Heart left ventricle (tissue), 16 donors: ENCODE measurements at regions of chr11 and their contacts with region 1.

Region 1: GRCh38 chr11:34002268-34002807 is 49.2 kb upstream of the CAPRIN1 start:
- DNase-seq: no peak
- ATAC-seq: no peak
- H3K4me3 ChIP-seq: no peak overlapping the region
- H3K27ac ChIP-seq: no peak overlapping the region
- H3K4me1 ChIP-seq: peaks cover 0 to 1% (median 0%) of the 10 kb centered on the region in 12 donors
- H3K27me3 ChIP-seq: peaks cover 0 to 14% (median 2%) of the 10 kb centered on the region in 9 donors
- CTCF ChIP-seq: no peak
- POLR2A ChIP-seq: no peak

Region 2: DNA sequence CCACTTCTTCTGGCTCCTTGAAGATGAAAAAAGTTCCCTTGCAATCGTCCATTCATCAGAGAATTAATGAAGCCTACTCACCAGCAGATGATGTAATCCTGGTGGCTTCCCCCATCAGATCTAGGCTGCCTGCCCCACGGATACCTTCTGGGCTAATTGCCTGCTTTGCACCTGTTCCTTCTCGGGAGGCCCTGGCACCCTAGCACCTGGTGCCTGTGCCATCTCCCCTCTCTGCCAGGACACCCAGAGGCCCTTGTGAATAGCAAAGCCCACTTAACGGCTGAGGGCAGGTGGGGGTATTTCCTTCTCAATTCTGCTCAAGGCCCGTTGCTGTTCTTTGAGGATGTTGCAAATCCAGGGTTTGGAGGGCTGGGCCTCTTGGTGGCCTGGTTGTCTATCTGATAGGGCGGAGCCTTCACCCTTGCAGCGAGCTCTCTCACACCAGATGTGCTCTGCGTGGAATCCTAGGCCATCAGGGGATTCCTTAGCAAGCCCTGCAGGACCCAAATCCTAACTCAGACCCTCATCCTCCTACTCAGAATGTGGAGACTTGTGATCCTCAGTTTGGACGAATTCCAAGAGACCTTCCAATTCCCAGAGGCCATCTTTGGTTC is 110.5 kb before region 1 on chr11 and contains the start of gene LMO2:
- intact Hi-C with region 1: no loop called
- DNase-seq: no peak
- ATAC-seq: peak in 1 of 4 donors; percentile 47
- H3K4me3 ChIP-seq: no peak within 1 kb of the TSS
- H3K27ac ChIP-seq: peak within 1 kb of the TSS in 1 of 12 donors; percentile 67
- H3K4me1 ChIP-seq: peaks cover 0 to 51% (median 0%) of the 10 kb centered on the region in 12 donors
- H3K27me3 ChIP-seq: no peaks in the 10 kb centered on the region
- CTCF ChIP-seq: no peak
- POLR2A ChIP-seq: no peak
- total RNA-seq, gene LMO2: 4.5 to 29.6 (median 8.7) TPM

Region 3: DNA sequence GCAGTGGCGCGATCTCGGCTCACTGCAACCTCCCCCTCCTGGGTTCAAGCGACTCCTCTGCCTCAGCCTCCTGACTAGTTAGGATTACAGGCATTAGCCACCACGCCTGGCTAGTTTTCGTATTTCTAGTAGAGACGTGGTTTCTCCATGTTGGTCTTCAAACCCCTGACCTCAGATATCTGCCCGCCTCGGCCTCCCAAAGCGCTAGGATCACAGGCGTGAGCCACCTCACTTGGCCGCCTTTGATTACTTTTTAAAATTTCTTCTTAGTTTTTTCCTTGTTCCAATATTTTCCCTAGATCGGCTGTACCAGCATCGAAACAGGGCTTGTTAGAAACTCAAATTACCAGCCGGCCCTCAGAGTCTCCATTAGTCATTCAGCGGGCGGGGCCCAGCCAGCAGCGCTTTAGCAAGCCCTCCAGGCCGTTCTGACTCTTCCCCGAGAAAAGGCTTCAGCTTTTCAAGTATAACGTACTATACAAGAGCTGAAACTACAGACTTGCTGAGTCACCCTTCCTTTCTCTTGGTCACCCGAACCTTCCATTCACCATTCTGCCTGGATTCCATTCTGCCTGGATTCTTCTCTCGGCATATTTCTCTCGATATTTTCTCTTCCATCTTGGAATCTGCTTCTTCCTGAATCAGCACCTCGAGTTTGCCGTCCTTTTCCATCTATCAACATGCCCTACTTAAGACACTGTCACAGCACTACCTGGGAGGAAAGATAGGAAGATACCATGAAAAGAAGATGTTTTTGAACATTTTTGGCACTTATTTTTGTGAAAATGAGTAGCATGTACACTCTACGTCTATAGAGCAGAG is 42.5 kb after region 1 on chr11:
- intact Hi-C with region 1: loop called in 3 of 10 experiments (anchors 5 kb)
- DNase-seq: no peak
- ATAC-seq: peak in 2 of 4 donors; percentile 34 to 55
- H3K4me3 ChIP-seq: peak overlapping the region in 1 of 12 donors; percentile 2
- H3K27ac ChIP-seq: no peak overlapping the region
- H3K4me1 ChIP-seq: no peaks in the 10 kb centered on the region
- H3K27me3 ChIP-seq: no peaks in the 10 kb centered on the region
- CTCF ChIP-seq: no peak
- POLR2A ChIP-seq: no peak

Region 4: GRCh38 chr11:34068111-34068510 is 65.8 kb after region 1 on chr11:
- intact Hi-C with region 1: no loop called
- DNase-seq: no peak
- ATAC-seq: peak; percentile 76 to 91 (median 90)
- H3K4me3 ChIP-seq: no peak overlapping the region
- H3K27ac ChIP-seq: peak overlapping the region in 8 of 12 donors; percentile 0 to 44 (median 28)
- H3K4me1 ChIP-seq: peaks cover 0 to 69% (median 41%) of the 10 kb centered on the region in 12 donors
- H3K27me3 ChIP-seq: no peaks in the 10 kb centered on the region
- CTCF ChIP-seq: no peak
- POLR2A ChIP-seq: no peak

Region 5: DNA sequence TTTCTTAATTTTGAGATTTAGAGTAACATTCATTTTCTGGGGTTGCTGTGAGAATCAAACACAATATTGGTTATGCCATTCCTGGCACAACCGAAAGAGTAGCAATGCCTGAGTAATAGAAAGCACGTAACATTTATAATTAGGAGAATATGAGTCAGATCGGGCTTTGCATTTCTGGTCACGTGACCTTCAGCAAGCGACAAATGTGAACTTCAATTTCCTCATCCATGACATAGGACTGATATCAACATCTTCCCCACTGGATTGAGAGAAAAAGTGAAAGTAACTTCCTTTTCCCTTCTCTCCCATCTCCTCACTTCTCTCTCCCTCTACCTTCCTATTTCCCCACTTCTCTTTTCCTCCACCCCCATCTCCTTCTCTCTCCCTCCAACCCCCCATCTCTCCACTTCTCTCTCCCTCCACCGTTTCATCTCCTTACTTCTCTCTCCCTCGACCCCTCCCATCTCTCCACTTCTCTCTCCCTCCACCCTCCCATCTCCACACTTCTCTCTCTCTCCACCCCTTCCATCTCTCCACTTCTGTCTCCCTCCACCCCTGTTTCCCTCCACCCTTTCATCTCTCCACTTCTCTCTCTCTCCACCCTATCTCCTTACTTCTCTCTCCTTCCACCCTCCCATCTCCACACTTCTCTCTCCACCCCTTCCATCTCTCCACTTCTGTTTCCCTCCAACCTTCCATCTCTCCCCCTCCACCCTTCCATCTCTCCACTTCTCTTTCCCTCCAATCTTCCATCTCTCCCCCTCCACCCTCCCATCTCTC is 402.9 kb after region 1 on chr11:
- intact Hi-C with region 1: no loop called
- DNase-seq: no peak
- ATAC-seq: no peak
- H3K4me3 ChIP-seq: peak overlapping the region in 2 of 12 donors; percentile 16 to 23
- H3K27ac ChIP-seq: no peak overlapping the region
- H3K4me1 ChIP-seq: peaks cover 0 to 5% (median 0%) of the 10 kb centered on the region in 12 donors
- H3K27me3 ChIP-seq: peaks cover 0 to 10% (median 0%) of the 10 kb centered on the region in 9 donors
- CTCF ChIP-seq: no peak
- POLR2A ChIP-seq: no peak